CD8-positive, alpha-beta T cell (primary cell): ENCODE measurements at regions of chr14 and their contacts with region 1.

Region 1: DNA sequence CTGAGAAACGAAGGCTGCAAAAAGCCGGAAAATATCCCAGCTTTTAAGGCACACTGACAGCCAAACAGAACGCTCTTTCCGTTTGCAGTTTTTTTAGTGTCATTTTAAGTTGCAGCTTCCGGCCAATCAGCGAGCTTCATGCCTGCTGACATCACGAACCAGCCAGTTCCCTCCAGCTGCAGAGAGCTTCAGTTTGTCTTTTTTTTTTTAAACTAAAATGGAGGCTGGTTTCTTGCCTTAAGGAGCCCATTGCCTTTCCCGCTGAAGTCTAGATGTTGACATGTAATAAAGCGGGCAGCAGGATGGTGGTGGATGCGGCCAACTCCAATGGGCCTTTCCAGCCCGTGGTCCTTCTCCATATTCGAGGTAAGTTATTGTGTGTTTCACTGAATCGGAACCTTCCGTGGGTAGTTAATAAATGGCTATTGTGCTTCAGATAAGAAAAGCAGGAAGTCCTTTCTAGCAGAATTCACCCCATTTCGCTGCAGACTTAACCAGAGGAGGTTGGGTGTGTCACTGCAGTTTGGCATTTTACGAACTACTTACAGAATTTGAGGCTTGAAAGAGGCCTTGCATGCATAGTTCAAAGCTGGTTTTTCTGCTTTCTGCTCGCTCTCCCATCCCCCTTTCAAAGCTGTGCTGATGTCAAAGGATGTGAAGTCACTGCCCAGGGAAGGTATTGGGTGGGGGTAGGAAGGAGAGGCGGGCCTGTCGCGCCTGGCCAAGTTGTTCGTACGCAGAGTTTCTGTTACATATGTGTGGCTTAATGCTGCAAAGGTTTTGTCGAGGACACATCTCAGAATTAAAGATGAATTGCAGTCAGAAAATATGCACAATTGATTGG is 48.4 kb downstream of the PPP2R5C start:
- DNase-seq: peak; percentile 67 to 97 (median 83)
- ATAC-seq: peak; percentile 86
- H3K4me3 ChIP-seq: peak overlapping the region; percentile 78 to 80
- H3K4me3 Mint-ChIP-seq: peak overlapping the region; percentile 94
- H3K27ac ChIP-seq: peak overlapping the region; percentile 97 to 99
- H3K27ac Mint-ChIP-seq: peak overlapping the region; percentile 99
- H3K4me1 ChIP-seq: peaks cover 42% of the 10 kb centered on the region
- H3K4me1 Mint-ChIP-seq: peaks cover 52% of the 10 kb centered on the region
- H3K27me3 ChIP-seq: no peaks in the 10 kb centered on the region
- H3K27me3 Mint-ChIP-seq: no peaks in the 10 kb centered on the region
- CTCF ChIP-seq: no peak

Region 2: GRCh38 chr14:101731187-101732080 is 78.5 kb before region 1 on chr14:
- CTCF ChIA-PET with region 1: no interaction called
- POLR2A ChIA-PET with region 1: no interaction called
- intact Hi-C with region 1: loop called in 1 of 2 experiments (anchors 1 kb)
- DNase-seq: peak; percentile 50 to 96 (median 80)
- ATAC-seq: peak; percentile 87
- H3K4me3 ChIP-seq: peak overlapping the region; percentile 24 to 28
- H3K4me3 Mint-ChIP-seq: peak overlapping the region; percentile 76
- H3K27ac ChIP-seq: peak overlapping the region; percentile 76 to 83
- H3K27ac Mint-ChIP-seq: peak overlapping the region; percentile 97
- H3K4me1 ChIP-seq: peaks cover 23% of the 10 kb centered on the region
- H3K4me1 Mint-ChIP-seq: peaks cover 44% of the 10 kb centered on the region
- H3K27me3 ChIP-seq: no peaks in the 10 kb centered on the region
- H3K27me3 Mint-ChIP-seq: no peaks in the 10 kb centered on the region
- CTCF ChIP-seq: no peak

Region 3: DNA sequence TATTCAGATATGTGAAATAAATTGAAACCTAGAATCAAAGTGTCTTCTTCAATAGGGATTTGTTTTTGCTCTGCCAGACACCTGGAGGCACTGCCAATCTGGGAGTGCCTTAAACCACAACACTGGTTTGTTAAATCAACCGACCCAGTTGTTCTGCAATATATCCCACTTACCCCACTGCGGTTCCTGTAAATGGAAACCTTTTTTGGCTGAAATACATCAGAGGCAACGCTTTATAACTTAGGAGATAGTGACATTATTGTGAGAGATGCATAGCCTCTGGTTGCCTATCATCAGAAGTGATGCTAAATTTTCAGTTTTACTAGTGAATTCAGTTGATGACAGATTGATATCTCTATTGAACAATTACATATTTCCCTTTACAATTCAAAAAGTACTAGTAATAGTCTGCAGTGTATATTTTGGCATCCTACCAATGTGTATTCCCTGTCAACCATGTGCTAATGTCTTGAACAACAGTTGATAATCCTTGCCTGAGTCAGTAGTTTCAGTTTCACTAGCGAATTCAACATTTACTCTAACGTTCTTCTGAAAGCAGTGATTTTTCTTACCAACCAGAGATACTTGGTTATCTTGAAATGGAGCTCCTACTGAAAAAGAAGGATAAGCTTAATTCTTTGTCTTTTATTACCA is 17.8 kb before region 1 on chr14:
- CTCF ChIA-PET with region 1: interaction called, 5 read pairs
- POLR2A ChIA-PET with region 1: interaction called, 7 read pairs
- intact Hi-C with region 1: loop called (anchors 2 kb)
- DNase-seq: peak in 2 of 9 experiments; percentile 45 to 71
- ATAC-seq: peak; percentile 85
- H3K4me3 ChIP-seq: peak overlapping the region; percentile 14 to 30
- H3K4me3 Mint-ChIP-seq: peak overlapping the region; percentile 72
- H3K27ac ChIP-seq: peak overlapping the region; percentile 7 to 79
- H3K27ac Mint-ChIP-seq: peak overlapping the region; percentile 72
- H3K4me1 ChIP-seq: peaks cover 12% of the 10 kb centered on the region
- H3K4me1 Mint-ChIP-seq: peaks cover 24% of the 10 kb centered on the region
- H3K27me3 ChIP-seq: no peaks in the 10 kb centered on the region
- H3K27me3 Mint-ChIP-seq: no peaks in the 10 kb centered on the region
- CTCF ChIP-seq: no peak

Region 4: DNA sequence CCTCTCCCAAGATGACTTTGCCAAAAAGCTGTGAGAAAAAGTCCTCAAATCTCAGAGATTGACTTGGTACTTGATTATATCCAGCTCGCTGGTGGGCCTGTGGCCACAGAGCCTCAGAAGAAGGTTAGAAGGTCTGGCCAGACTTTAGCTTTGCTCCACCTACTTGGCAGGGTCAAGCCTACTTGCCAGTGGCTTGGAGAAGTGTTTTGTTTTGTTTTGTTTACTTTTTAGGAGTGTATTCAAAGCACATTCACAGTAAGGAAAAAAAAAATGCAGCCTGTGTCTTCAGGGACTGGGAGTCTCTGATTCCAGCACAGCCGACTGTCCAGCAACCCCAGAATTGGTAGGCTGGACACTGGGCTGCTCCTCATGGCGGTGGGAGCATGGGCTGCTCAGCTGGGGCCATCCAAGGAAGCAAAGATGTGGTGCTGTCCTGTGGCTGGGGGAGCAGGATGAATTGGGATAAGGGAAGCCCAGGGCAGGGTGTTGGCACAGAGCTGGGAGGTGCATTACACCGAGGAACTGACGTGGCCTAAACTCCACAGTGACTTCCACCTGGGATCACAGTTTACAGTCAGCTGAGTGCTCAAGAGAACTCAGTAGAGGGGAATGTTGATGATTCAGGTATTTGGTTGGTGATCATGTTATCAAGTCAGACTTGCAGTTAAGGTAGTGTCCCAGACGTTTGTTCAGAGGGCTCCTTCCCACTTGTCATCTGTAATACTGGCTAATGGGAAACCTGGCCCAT is 25.1 kb after region 1 on chr14:
- CTCF ChIA-PET with region 1: interaction called, 6 read pairs
- POLR2A ChIA-PET with region 1: interaction called, 239 read pairs
- intact Hi-C with region 1: loop called in 1 of 2 experiments (anchors 5 kb)
- DNase-seq: no peak
- ATAC-seq: no peak
- H3K4me3 ChIP-seq: no peak overlapping the region
- H3K4me3 Mint-ChIP-seq: peak overlapping the region; percentile 5
- H3K27ac ChIP-seq: peak overlapping the region in 1 of 2 experiments; percentile 49
- H3K27ac Mint-ChIP-seq: peak overlapping the region; percentile 90
- H3K4me1 ChIP-seq: peaks cover 82% of the 10 kb centered on the region
- H3K4me1 Mint-ChIP-seq: peaks cover 85% of the 10 kb centered on the region
- H3K27me3 ChIP-seq: no peaks in the 10 kb centered on the region
- H3K27me3 Mint-ChIP-seq: no peaks in the 10 kb centered on the region
- CTCF ChIP-seq: no peak

Region 5: GRCh38 chr14:102086972-102087761 is 277.3 kb after region 1 on chr14 and contains the start of gene HSP90AA1:
- CTCF ChIA-PET with region 1: no interaction called
- POLR2A ChIA-PET with region 1: no interaction called
- intact Hi-C with region 1: loop called in 1 of 2 experiments (anchors 2 kb)
- DNase-seq: peak; percentile 88 to 98 (median 95)
- ATAC-seq: peak; percentile 74
- H3K4me3 ChIP-seq: peak within 1 kb of the TSS; percentile 75 to 78
- H3K4me3 Mint-ChIP-seq: peak within 1 kb of the TSS; percentile 97
- H3K27ac ChIP-seq: peak within 1 kb of the TSS; percentile 96 to 97
- H3K27ac Mint-ChIP-seq: peak within 1 kb of the TSS; percentile 99
- H3K4me1 ChIP-seq: peaks cover 49% of the 10 kb centered on the region
- H3K4me1 Mint-ChIP-seq: peaks cover 58% of the 10 kb centered on the region
- H3K27me3 ChIP-seq: no peaks in the 10 kb centered on the region
- H3K27me3 Mint-ChIP-seq: no peaks in the 10 kb centered on the region
- CTCF ChIP-seq: no peak
- total RNA-seq, gene HSP90AA1: 532 to 539 TPM

Region 6: DNA sequence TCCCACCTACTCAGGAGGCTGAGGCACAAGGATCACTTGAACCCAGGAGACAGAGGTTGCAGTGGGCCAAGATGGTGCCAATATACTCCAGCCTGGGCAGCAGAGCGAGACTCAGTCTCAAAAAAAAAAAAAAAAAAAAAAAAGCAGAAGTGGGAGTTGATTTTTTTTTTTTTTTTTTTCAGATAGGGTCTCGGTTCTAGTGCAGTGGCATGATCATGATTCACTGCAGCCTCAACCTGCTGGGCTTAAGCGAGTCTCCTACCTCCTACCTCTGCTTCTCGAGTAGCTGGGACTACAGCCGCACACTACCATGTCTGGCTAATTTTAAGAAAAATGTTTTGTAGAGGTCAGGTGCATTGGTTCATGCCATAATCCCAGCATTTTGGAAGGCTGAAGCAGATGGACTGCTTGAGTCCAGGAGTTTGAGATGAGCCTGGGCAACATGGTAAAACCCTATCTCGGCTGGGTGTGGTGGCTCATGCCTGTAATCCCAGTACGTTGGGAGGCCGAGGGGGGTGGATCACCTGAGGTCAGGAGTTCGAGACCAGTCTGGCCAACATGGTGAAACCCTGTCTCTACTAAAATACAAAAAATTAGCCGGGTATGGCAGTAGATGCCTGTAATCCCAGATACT is 293.3 kb after region 1 on chr14:
- CTCF ChIA-PET with region 1: no interaction called
- POLR2A ChIA-PET with region 1: no interaction called
- intact Hi-C with region 1: no loop called
- DNase-seq: no peak
- ATAC-seq: no peak
- H3K4me3 ChIP-seq: no peak overlapping the region
- H3K4me3 Mint-ChIP-seq: no peak overlapping the region
- H3K27ac ChIP-seq: no peak overlapping the region
- H3K27ac Mint-ChIP-seq: no peak overlapping the region
- H3K4me1 ChIP-seq: no peaks in the 10 kb centered on the region
- H3K4me1 Mint-ChIP-seq: no peaks in the 10 kb centered on the region
- H3K27me3 ChIP-seq: no peaks in the 10 kb centered on the region
- H3K27me3 Mint-ChIP-seq: no peaks in the 10 kb centered on the region
- CTCF ChIP-seq: no peak

Region 7: DNA sequence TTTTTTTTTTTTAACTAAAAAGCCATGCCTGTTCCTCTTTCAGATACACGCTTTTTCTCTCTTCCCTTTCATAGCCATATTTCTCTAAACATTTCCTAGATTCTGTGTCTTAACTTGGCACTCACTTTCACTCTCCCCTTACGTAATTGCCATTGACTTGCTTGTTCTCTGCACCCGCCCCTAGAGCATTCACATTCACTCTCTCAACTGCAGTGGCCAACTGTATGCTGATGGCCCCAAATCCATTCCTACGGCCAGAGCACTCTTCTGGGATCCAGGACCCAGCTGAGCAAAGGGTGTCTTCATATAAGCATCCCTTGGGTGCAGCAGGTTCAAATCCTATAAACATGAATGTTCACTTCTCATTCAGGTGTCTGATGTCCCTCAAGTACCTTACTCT is 1653.3 kb after region 1 on chr14:
- CTCF ChIA-PET with region 1: no interaction called
- POLR2A ChIA-PET with region 1: no interaction called
- intact Hi-C with region 1: no loop called
- DNase-seq: no peak
- ATAC-seq: no peak
- H3K4me3 ChIP-seq: no peak overlapping the region
- H3K4me3 Mint-ChIP-seq: no peak overlapping the region
- H3K27ac ChIP-seq: no peak overlapping the region
- H3K27ac Mint-ChIP-seq: peak overlapping the region; percentile 24
- H3K4me1 ChIP-seq: peaks cover 14% of the 10 kb centered on the region
- H3K4me1 Mint-ChIP-seq: peaks cover 16% of the 10 kb centered on the region
- H3K27me3 ChIP-seq: no peaks in the 10 kb centered on the region
- H3K27me3 Mint-ChIP-seq: no peaks in the 10 kb centered on the region
- CTCF ChIP-seq: no peak